ENCODE measurements at regions of chr14 and their contacts with region 1.

Region 1: DNA sequence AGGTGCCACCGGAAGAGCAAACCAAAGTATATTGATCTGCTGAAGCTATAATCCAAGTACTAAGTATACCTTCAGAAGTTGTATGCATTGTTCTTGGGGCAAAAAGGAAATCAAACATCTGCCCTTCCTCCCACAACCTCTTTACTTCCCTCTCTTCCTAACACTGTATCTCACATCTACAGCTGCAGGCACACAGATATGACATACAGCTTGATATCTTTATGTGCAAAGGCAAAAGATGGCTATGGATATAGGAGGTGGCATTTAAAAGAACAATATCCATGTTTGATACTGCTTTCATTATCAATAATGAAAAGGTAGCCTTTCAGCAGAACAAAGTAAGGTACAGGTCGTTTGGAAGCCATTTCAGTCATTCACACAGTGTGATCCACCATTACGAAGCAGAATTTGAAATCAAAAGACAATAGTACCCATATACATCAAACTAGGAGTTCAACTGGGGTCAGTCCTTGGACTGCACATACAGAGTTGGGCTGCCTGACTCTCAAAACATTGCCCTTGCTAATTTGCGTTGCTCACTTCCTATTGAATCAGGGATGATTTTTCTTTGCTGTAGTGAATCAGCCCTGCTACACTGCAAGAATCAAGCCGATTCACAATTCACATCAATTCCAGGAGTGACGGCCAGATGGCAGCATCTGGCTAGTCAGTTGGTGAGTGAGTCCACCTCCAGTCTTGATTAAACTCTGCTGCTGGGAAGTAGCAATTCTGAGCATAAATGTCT is 8.9 kb downstream of the ANG start:
- DNase-seq: peak in 1 of 2 experiments; percentile 77
- H3K4me3 ChIP-seq: no peak overlapping the region
- H3K27ac ChIP-seq: no peak overlapping the region
- H3K4me1 ChIP-seq: no peaks in the 10 kb centered on the region; a peak in 1 of 7 replicates
- H3K27me3 ChIP-seq: no peaks in the 10 kb centered on the region
- CTCF ChIP-seq: peak; percentile 76 to 90 (median 87)
- EP300 ChIP-seq: no peak
- POLR2A ChIP-seq: no peak
- RAD21 ChIP-seq: peak; percentile 97 to 98

Region 2: DNA sequence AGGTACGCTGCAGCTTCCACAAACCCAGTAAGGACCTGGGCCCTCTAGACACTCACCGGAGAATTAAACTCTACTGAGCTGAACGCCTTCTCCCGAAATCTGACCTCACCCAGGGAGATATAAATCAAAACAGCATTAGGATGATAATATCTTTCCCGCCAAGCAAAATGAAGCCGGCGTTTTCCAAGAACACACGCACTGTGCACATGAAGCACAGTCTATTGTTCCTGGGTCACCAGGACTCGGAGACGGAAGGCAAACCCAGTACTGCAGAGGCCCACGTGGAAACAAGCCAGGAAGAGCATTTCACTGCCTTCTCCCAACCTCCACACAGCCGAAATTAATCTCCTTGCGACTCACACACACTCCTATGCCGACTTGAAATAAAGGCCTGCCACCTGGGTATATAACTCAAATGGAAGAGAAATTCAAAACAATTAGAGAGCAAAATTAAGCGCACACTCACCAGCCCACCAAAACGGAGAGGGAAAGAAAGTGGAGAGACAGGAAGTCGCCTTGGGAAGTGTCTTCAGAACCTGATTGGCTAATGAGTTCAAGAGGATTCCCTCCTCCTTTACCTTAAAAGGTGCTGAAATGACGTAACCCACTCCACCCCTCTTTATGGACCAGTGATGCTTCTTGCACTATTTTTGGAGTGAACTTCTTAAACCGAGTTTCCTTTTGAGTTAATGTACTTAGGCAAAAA is 364.5 kb before region 1 on chr14 and contains the start of gene CCNB1IP1:
- CTCF ChIA-PET with region 1: no interaction called
- POLR2A ChIA-PET with region 1: no interaction called
- DNase-seq: peak; percentile 13 to 61
- H3K4me3 ChIP-seq: peak within 1 kb of the TSS; percentile 85 to 98 (median 94)
- H3K27ac ChIP-seq: peak within 1 kb of the TSS; percentile 87
- H3K4me1 ChIP-seq: peaks cover 0 to 3% (median 0%) of the 10 kb centered on the region in 4 experiments; a peak in 3 of 7 replicates
- H3K27me3 ChIP-seq: no peaks in the 10 kb centered on the region
- CTCF ChIP-seq: no peak
- EP300 ChIP-seq: no peak
- POLR2A ChIP-seq: peak; percentile 81 to 99
- RAD21 ChIP-seq: no peak
- total RNA-seq, gene CCNB1IP1: 156 and 173 TPM in 2 replicates

Region 3: GRCh38 chr14:20632682-20633428 is 64.6 kb before region 1 on chr14:
- CTCF ChIA-PET with region 1: no interaction called
- POLR2A ChIA-PET with region 1: no interaction called
- DNase-seq: peak; percentile 82 to 87
- H3K4me3 ChIP-seq: peak overlapping the region; percentile 76 to 96 (median 88)
- H3K27ac ChIP-seq: no peak overlapping the region
- H3K4me1 ChIP-seq: peaks cover 0 to 6% (median 0%) of the 10 kb centered on the region in 4 experiments; a peak in 2 of 7 replicates
- H3K27me3 ChIP-seq: peaks cover 0 to 12% (median 3%) of the 10 kb centered on the region in 4 experiments; a peak in 3 of 7 replicates
- CTCF ChIP-seq: no peak
- EP300 ChIP-seq: no peak
- POLR2A ChIP-seq: no peak
- RAD21 ChIP-seq: no peak

Region 4: GRCh38 chr14:20682435-20683124 is 14.9 kb before region 1 on chr14:
- CTCF ChIA-PET with region 1: interaction called, 22 read pairs
- POLR2A ChIA-PET with region 1: interaction called, 3 read pairs
- DNase-seq: peak in 1 of 2 experiments; percentile 76
- H3K4me3 ChIP-seq: peak overlapping the region; percentile 67 to 99 (median 98)
- H3K27ac ChIP-seq: peak overlapping the region; percentile 62; the same call in 1 of the 2 replicates
- H3K4me1 ChIP-seq: peaks cover 0 to 6% (median 4%) of the 10 kb centered on the region in 4 experiments; a peak in 5 of 7 replicates
- H3K27me3 ChIP-seq: no peaks in the 10 kb centered on the region
- CTCF ChIP-seq: no peak
- EP300 ChIP-seq: no peak
- POLR2A ChIP-seq: peak; percentile 42 to 60
- RAD21 ChIP-seq: no peak

Region 5: DNA sequence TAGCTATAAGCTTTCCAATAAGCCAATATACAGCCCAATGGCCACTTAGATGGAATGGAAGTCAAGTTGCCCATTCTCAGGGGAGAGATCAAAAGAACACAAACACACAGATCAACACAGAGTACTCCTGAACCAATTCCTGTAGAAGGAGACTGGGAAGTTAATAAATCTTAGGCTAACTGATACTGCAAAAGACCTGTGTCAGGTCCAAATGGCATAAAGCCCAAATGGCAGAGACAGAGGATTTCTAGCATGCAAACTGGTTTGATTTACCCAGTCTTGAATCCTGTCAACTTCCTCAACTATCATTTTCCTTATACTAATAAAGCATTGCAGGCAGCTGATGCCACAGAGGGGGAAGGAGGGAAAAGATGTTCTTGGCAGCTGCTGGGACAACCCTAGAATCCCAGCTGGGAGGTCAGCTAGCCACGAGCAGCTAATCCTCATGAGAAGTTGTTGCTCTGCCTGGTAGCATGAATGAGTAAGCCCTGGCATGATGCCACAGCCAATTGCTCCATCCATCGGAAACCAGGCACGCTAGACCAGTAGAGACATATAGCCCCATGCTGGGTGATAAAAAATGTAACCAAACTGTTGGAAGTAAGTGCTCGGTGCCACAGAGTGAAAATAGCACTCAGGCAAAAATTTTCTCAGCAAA is 17.3 kb after region 1 on chr14:
- CTCF ChIA-PET with region 1: interaction called, 15 read pairs
- POLR2A ChIA-PET with region 1: no interaction called
- DNase-seq: no peak
- H3K4me3 ChIP-seq: no peak overlapping the region
- H3K27ac ChIP-seq: no peak overlapping the region
- H3K4me1 ChIP-seq: no peaks in the 10 kb centered on the region
- H3K27me3 ChIP-seq: peaks cover 0 to 1% (median 0%) of the 10 kb centered on the region in 4 experiments; a peak in 1 of 7 replicates
- CTCF ChIP-seq: no peak
- EP300 ChIP-seq: no peak
- POLR2A ChIP-seq: no peak
- RAD21 ChIP-seq: no peak

Region 6: DNA sequence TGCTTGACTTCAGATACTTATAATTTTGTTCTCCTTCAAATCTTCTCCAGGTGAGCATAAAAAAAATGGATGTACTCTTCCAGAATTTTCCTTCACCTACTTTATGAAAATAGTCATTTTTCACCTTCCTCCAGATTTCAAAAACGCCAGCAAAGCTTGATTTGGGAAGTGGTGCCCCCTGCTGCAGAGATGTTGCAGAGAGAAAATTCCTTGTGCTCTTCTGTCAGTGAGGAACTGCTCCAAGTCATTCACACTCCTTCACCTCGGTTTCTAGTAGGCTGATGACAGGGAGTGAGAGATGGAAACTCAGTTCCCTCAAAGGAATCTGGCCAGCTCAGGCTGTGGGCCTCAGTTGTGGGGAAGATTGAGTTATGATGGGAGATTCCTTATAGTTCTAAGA is 169.5 kb after region 1 on chr14:
- CTCF ChIA-PET with region 1: interaction called, 16 read pairs
- POLR2A ChIA-PET with region 1: no interaction called
- DNase-seq: no peak
- H3K4me3 ChIP-seq: no peak overlapping the region
- H3K27ac ChIP-seq: no peak overlapping the region
- H3K4me1 ChIP-seq: no peaks in the 10 kb centered on the region
- H3K27me3 ChIP-seq: no peaks in the 10 kb centered on the region
- CTCF ChIP-seq: peak; percentile 33 to 71 (median 70)
- EP300 ChIP-seq: no peak
- POLR2A ChIP-seq: no peak
- RAD21 ChIP-seq: peak; percentile 69 to 75

Region 7: GRCh38 chr14:20873370-20874177 is 176.1 kb after region 1 on chr14:
- CTCF ChIA-PET with region 1: interaction called, 15 read pairs
- POLR2A ChIA-PET with region 1: interaction called, 3 read pairs
- DNase-seq: peak; percentile 87 to 92
- H3K4me3 ChIP-seq: peak overlapping the region; percentile 27 to 55 (median 38); a peak in 7 of 8 replicates
- H3K27ac ChIP-seq: no peak overlapping the region
- H3K4me1 ChIP-seq: no peaks in the 10 kb centered on the region
- H3K27me3 ChIP-seq: no peaks in the 10 kb centered on the region; a peak in 4 of 7 replicates
- CTCF ChIP-seq: peak; percentile 89 to 92 (median 89)
- EP300 ChIP-seq: no peak
- POLR2A ChIP-seq: peak in 1 of 2 experiments; percentile 64; a peak in 2 of 3 replicates
- RAD21 ChIP-seq: peak; percentile 90 to 91